A549 (cell line): ENCODE measurements at regions of chr17 and their contacts with region 1.

Region 1: DNA sequence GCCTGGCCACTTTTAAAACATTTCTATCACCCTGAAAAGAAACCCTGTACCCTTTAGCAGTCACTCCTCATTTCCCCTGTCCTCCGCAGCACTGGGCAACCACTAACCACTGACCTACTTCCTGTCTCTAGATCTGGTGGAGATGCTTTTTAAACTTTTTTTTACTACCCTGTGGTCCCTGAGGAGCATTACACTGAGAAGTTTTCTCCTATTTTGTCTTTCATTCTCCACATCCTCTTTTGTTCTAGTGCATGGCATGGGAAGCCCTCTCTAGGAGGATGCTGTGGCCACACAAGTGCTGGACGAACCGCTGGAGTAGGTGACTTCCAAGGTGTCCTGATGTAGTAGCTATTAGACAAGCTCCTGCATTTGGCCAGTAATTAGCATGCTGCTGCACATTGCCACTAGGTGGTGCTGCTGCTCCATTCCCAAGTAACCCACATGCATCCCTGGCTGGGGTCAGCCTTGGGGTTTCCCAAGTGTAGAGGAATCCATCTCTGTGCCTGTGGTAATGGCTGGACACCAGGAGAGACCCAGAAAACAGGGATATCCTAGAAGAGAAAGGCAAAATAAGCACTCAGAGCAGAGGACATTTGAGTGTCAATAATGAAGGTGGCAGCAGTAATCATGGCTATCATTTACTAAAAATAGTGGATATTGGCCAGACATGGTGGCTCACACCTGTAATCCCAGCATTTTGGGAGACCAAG is 143.8 kb upstream of the CRHR1 start:
- DNase-seq: peak; percentile 81 to 88
- ATAC-seq: peak; percentile 96
- H3K4me3 ChIP-seq: no peak overlapping the region
- H3K27ac ChIP-seq: no peak overlapping the region
- H3K4me1 ChIP-seq: no peaks in the 10 kb centered on the region
- CTCF ChIP-seq: peak; percentile 99
- EP300 ChIP-seq: no peak
- POLR2A ChIP-seq: no peak
- RAD21 ChIP-seq: peak; percentile 97 to 99

Region 2: GRCh38 chr17:45353043-45353442 is 287.3 kb before region 1 on chr17:
- CTCF ChIA-PET with region 1: no interaction called
- POLR2A ChIA-PET with region 1: no interaction called
- DNase-seq: no peak
- ATAC-seq: no peak
- H3K4me3 ChIP-seq: no peak overlapping the region
- H3K27ac ChIP-seq: no peak overlapping the region
- H3K4me1 ChIP-seq: peaks cover 10% of the 10 kb centered on the region; the same call in 2 of the 3 replicates
- CTCF ChIP-seq: no peak
- EP300 ChIP-seq: no peak
- POLR2A ChIP-seq: no peak
- RAD21 ChIP-seq: no peak

Region 3: GRCh38 chr17:45666046-45666600 is 25.8 kb after region 1 on chr17:
- CTCF ChIA-PET with region 1: interaction called, 27 read pairs
- POLR2A ChIA-PET with region 1: no interaction called
- DNase-seq: no peak
- ATAC-seq: peak in 1 of 2 experiments; percentile 43; a peak in 4 of 6 replicates
- H3K4me3 ChIP-seq: no peak overlapping the region
- H3K27ac ChIP-seq: no peak overlapping the region
- H3K4me1 ChIP-seq: no peaks in the 10 kb centered on the region
- CTCF ChIP-seq: peak; percentile 24; the same call in 1 of the 3 replicates
- EP300 ChIP-seq: no peak
- POLR2A ChIP-seq: no peak
- RAD21 ChIP-seq: peak; percentile 56 to 57

Region 4: DNA sequence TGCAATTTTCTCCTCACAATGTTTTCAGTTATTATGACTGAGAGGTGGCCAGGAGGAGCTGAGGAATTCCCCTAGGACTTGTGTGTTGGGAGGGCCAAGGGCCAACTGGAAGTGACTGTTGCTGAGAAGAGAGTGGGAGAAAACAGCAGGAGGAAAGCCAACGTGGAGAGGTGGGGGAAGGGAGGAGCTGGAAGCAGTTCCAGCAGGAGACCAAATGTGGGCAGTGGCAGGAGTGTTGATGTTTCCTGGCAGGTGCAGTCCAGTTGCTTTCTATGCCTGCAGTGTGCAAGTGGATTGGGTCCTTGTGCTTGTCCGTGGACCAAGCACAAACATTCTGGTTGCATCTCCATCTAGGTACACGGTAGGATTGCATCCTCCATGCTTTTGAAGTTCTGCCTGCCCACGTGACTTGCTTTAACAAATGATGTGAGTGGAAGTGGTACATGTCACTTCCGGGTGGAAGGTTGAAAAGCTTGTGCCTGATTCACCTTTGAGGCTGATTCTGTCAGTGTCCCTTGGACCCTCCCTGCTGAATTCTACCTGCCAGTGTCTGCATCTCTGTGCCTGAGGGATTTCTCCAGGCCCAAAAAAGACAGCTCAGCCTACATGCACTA is 89.1 kb after region 1 on chr17:
- CTCF ChIA-PET with region 1: interaction called, 11 read pairs
- POLR2A ChIA-PET with region 1: no interaction called
- DNase-seq: no peak
- ATAC-seq: no peak
- H3K4me3 ChIP-seq: no peak overlapping the region
- H3K27ac ChIP-seq: no peak overlapping the region
- H3K4me1 ChIP-seq: no peaks in the 10 kb centered on the region
- CTCF ChIP-seq: no peak
- EP300 ChIP-seq: no peak
- POLR2A ChIP-seq: no peak
- RAD21 ChIP-seq: no peak

Region 5: GRCh38 chr17:45823598-45823997 is 183.3 kb after region 1 on chr17:
- CTCF ChIA-PET with region 1: interaction called, 317 read pairs
- POLR2A ChIA-PET with region 1: no interaction called
- DNase-seq: no peak
- ATAC-seq: no peak
- H3K4me3 ChIP-seq: no peak overlapping the region
- H3K27ac ChIP-seq: no peak overlapping the region
- H3K4me1 ChIP-seq: no peaks in the 10 kb centered on the region
- CTCF ChIP-seq: no peak
- EP300 ChIP-seq: no peak
- POLR2A ChIP-seq: no peak
- RAD21 ChIP-seq: no peak

Region 6: DNA sequence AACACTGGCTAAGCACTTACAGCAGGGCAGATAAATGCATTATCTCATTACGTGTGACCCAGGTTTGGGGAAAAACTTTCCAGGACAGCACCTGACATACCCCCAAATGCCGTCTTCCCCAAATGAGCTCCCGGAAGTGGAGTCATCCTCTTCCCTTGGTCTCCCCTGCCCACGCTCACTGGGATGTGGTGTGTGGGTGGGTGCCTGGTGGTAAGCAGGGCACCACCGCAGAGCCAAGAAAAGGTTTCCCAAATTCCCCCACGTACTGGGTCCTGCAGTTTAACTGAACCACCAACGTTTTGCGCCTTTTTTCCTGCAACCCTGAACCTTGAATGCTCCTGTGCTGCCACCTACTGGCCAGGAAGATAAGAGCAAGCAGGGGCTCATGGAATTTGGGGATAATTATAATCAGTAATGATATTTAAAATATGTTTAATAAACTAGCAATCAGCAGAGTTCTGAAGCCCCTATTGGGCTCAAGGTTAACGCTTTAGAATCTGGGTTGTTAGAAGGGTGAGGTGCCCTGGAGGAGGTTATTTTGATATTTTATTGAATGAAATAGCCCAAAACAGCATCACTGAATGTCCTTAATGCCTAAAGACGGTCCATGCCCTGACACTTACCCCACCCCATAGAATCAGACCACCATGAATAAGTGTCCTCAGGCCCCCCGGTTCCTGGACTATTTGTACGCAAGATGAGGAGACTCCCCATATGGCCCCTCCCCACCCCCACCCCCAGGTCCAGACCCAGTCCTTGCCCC is 212.4 kb after region 1 on chr17:
- CTCF ChIA-PET with region 1: interaction called, 136 read pairs
- POLR2A ChIA-PET with region 1: no interaction called
- DNase-seq: peak; percentile 57 to 70
- ATAC-seq: peak; percentile 25 to 73; a peak in 4 of 6 replicates
- H3K4me3 ChIP-seq: peak overlapping the region; percentile 14; the same call in 1 of the 3 replicates
- H3K27ac ChIP-seq: peak overlapping the region in 1 of 2 experiments; percentile 61; a peak in 1 of 6 replicates
- H3K4me1 ChIP-seq: 0 out of 3 replicates have a peak, but pooled peaks cover 2% of the 10 kb centered on the region
- CTCF ChIP-seq: peak; percentile 97
- EP300 ChIP-seq: no peak
- POLR2A ChIP-seq: no peak
- RAD21 ChIP-seq: peak; percentile 94 to 95

Region 7: DNA sequence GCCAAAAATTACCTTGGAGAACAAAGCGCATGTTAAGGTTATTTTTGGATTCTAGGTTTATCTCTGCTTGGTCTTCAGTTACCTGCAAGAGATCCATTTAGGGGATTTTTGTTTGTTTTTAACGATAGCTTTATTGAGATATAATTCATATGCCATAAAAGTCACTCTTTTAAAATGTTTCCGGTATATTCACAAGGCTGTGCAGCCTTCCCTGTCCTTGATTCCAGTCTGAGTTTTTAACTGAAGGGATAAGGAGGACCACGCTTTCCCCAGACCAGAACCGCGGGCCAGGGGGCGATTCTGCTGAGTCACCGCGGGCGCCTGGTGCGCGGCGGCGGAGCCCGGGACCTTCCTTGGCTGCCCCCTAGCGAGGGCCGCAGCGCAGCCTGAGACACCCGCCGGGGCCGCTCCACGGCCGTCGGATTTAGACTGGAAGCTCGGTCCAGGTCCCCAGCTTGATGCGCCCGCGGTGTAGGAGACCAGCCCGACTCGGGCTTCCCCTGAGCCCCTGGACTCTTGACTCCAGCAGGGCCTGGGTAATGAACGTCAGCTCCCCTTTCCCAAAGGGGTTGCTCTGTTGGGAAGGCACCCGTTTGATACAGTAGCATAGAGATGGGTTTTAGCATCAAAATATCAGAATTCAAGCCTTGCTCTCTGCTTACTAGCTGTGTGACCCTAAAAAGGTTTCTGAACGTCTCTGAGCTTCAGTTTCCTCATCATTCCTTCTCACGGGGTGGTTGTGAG is 308.8 kb after region 1 on chr17:
- CTCF ChIA-PET with region 1: interaction called, 19 read pairs
- POLR2A ChIA-PET with region 1: interaction called, 3 read pairs
- DNase-seq: peak; percentile 81 to 94
- ATAC-seq: peak; percentile 91 to 99
- H3K4me3 ChIP-seq: 0 out of 3 replicates have a peak overlapping the region, but pooled peaks have one; percentile 7
- H3K27ac ChIP-seq: peak overlapping the region; percentile 88 to 90
- H3K4me1 ChIP-seq: peaks cover 9% of the 10 kb centered on the region
- CTCF ChIP-seq: peak; percentile 90
- EP300 ChIP-seq: no peak
- POLR2A ChIP-seq: 0 out of 2 replicates have a peak, but pooled peaks have one; percentile 6
- RAD21 ChIP-seq: peak; percentile 57 to 76